ENCODE measurements at regions of chr1 and their contacts with region 1.

Region 1: DNA sequence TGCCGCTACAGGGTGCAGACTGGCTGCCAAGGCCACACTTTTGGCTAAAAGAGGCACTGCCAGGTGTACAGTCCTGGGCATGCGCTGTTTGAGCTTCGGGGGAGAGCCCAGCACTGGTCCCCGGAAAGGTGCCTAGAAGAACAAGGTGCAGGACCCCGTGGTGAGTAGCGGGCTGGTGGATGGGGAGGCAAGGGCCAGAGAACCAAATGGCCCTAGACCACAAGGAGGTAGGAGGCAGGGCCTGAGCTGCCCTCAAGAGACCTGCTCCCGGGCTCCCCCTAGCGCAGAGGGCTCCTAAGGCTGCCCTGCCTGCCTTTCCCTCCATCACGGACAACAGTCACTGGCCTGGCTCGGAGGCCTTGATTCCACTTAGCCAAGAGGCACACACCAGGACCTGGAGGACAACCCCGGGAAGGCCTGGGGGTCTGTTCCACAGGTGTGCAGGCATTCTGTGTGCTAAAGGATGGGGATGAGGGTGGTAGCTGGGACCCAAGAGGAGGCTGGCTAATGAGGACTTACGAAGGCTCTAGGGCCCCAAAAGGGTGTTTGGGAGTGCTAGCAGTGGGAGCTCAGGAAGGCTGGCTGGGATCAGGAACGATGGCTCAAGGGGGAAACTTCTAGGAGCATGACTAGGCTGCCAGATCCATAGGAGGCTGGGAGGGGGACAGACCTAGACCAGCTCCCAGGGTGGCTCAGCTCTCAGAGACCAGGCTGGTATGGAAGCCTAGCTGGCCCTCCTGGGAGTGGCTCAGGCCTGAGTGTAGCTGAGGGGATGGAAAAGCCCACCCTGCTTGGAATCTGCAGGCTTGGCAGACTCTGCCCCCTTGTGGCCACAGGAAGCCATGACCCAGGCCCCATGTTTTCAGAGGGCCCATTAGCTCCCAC is 742 bp downstream of the ARTN start:
- DNase-seq: peak in 9 of 10 donors; percentile 53 to 76 (median 64)
- H3K4me3 ChIP-seq: peak overlapping the region in 11 of 59 donors; percentile 11 to 54 (median 39)
- H3K27ac ChIP-seq: peak overlapping the region in 3 of 59 donors; percentile 1 to 68 (median 5)
- H3K27me3 ChIP-seq: peaks cover 0 to 9% (median 0%) of the 10 kb centered on the region in 45 donors
- CTCF ChIP-seq: peak; percentile 62 to 95 (median 86)

Region 2: DNA sequence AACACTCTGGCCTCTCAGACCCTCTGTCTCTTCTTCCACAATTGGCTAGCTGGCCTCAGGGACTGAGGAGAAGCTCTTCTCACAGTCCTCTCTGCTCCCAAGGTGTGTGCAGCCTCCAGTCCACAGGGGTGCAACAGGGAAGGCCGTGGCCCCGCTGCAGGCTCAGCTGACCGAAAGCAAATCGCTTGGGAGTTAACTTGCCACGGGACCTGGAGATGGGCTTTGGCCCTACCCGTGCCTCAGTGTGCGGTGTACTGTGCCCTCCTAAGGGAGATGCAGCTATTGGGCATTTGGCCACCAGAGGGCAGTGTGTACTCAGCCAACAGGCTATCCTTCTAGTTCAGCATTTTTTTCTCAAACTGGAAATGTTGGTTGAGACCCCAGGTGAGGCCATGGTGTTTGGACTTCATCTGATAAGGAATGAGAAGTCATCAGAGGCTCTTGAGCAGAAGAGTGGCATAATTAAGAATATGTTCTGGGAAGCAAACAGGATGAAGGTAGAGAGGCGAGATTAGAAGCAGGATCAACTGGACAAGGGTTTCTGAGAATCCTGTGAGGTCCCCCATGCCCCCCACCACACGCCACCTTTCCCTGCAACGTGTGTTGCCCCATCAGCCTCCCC is 707.1 kb before region 1 on chr1:
- intact Hi-C with region 1: loop called in 1 of 2 experiments (anchors 10 kb)
- DNase-seq: peak; percentile 79 to 91 (median 88)
- H3K4me3 ChIP-seq: no peak overlapping the region
- H3K27ac ChIP-seq: peak overlapping the region in 3 of 59 donors; percentile 13 to 49 (median 27)
- H3K27me3 ChIP-seq: no peaks in the 10 kb centered on the region
- CTCF ChIP-seq: peak; percentile 91 to 100 (median 97)

Region 3: GRCh38 chr1:43763497-43763973 is 170.8 kb before region 1 on chr1:
- intact Hi-C with region 1: loop called (anchors 1 to 5 kb)
- DNase-seq: peak in 9 of 10 donors; percentile 47 to 88 (median 61)
- H3K4me3 ChIP-seq: no peak overlapping the region
- H3K27ac ChIP-seq: no peak overlapping the region
- H3K27me3 ChIP-seq: no peaks in the 10 kb centered on the region
- CTCF ChIP-seq: peak; percentile 59 to 91 (median 83)

Region 4: DNA sequence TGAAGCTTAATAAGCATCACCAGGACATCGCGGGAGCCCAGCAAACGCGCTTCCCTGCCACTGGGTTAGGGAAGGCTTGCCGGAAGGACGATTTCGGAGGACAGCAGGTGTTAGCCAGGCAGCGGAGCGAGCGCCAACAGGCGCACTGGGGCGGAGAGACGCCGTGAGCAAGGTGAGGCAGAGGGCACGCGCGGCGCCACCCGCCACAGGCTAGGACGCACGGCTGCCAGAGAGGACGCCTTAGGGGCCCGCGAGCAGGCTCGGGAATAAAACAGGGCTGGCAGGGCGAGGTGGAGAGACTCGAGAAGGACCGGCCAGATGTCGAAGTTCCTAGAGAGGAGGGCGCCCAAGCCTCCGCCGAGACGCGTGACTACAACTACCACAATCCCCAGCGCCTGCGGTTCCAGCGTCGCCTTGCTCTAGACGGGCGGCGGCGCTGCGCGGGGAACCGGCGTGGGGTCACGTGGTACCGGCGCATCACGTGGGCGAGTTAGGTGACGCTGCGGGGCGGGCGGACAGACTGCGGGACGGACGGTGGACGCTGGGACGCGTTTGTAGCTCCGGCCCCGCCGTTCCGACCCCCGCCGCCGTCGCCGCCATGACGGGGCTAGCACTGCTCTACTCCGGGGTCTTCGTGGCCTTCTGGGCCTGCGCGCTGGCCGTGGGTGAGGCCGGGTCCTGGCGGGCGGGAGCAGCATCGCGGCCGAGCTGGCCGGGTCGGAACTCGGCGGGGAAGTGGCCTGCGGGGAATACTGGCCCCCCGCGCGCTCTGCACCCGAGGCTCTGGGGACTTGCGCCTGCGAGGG is 40.3 kb after region 1 on chr1 and contains the start of gene ATP6V0B:
- intact Hi-C with region 1: no loop called
- DNase-seq: peak; percentile 96 to 100 (median 98)
- H3K4me3 ChIP-seq: peak within 1 kb of the TSS; percentile 67 to 99 (median 94)
- H3K27ac ChIP-seq: peak within 1 kb of the TSS; percentile 81 to 98 (median 93)
- H3K27me3 ChIP-seq: no peaks in the 10 kb centered on the region
- CTCF ChIP-seq: peak in 54 of 56 donors; percentile 9 to 81 (median 58)
- total RNA-seq, gene ATP6V0B: 112 to 276 (median 202) TPM

Region 5: DNA sequence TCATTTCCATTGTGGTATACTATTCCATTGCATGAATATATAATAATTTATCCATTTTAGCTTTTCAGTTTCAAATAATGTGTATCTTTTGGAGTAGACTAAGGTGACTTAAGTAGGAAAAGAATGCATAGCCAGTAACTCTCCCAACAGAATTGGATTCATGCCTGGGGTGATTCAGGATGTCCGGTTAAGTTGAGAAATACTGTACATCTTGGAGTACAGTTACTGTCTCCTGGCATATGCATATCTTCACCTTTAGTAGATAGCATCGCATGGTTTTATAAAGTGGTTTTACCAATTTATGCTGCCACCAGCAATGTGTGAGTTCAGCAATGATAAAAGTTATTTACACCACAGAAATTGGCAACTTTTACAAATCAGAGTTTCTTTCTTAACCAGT is 115.5 kb after region 1 on chr1:
- intact Hi-C with region 1: loop called in 1 of 2 experiments (anchors 5 kb)
- DNase-seq: no peak
- H3K4me3 ChIP-seq: no peak overlapping the region
- H3K27ac ChIP-seq: no peak overlapping the region
- H3K27me3 ChIP-seq: no peaks in the 10 kb centered on the region
- CTCF ChIP-seq: no peak

Measured in dorsolateral prefrontal cortex (tissue), 120 donors.